Left cardiac atrium (tissue), 4 donors: ENCODE measurements at regions of chr16 and their contacts with region 1.

Region 1: DNA sequence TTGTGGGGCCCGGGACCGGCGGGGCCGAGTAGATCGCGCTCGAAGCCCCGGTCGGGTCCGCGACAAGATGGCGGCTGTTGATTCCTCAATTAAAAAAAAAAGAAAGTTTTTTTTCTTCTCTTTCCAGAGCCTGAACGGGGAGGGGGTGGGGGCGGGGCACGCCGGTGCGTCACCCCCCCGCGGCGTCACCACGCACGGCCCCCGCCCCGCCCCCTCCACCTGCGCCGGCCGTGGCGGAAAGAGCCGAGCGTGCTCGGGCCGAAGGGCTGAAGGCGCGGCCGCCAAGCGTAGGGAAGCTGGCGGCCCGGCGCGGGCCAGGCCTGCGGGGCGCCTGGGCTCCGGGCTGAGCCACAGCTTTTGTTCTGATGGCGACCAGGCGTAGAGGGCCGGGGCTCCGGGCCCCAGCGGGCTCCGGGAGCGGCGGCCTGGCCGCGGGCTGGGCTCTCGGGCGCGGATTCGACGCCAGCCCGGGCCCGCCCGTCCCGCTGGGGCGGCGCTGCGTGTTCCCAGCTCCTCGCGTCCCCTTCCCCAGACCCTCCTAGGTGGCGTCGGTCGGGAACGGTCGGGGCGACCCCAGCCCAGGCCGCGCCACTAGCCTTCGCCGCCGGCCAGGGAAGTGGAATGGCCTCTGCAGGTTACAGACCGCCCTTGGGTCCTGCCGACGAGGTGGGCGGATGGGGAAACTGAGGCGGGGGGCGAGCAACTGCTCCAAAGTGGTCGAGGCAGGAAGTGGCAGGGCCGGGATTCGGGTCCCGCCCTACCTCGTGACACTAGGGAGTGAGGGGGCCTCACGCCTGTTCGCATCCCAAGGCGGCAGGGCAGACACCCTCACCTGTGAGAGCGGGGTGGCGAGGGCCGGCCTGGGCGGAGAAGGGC is at the start of gene CREBBP:
- DNase-seq: peak; percentile 86
- ATAC-seq: peak; percentile 91 to 93
- total RNA-seq, gene CREBBP: 39.0 to 39.3 TPM

Region 2: GRCh38 chr16:3596101-3596861 is 284.6 kb before region 1 on chr16:
- intact Hi-C with region 1: no loop called
- DNase-seq: no peak
- ATAC-seq: no peak

Region 3: DNA sequence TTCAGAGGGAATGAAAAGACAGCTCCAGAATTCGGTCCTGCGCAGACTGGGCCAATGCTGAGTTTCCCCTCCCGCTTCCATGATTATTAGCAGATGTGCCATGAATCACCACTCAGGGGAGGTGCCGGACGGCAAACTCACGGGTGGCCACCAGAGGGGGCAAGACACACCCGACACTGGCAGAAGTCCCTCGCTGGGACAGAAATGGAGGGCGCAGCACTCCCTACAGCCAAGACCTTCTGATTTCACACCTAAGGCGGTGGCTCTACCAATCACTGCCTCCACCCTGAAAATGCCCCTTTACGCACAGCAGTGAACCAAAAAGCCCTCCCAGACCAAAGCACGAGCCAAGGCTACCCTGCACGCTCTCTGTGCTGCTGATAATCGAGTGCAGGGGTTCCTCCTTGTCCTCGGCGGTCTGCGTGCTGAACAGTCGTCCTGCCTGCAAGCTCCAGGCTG is 190.4 kb before region 1 on chr16:
- intact Hi-C with region 1: loop called (anchors 2 to 5 kb)
- DNase-seq: peak; percentile 91
- ATAC-seq: peak; percentile 94 to 96

Region 4: GRCh38 chr16:3780570-3780969 is 100.3 kb before region 1 on chr16:
- intact Hi-C with region 1: loop called in 1 of 2 experiments (anchors 10 kb)
- DNase-seq: no peak
- ATAC-seq: no peak